ENCODE measurements at regions of chr9 and their contacts with region 1.

Region 1: GRCh38 chr9:126558051-126558665 is 55.6 kb upstream of the LMX1B start:
- H3K4me3 Mint-ChIP-seq: no peak overlapping the region
- H3K27ac Mint-ChIP-seq: no peak overlapping the region
- H3K4me1 Mint-ChIP-seq: peaks cover 22% of the 10 kb centered on the region
- H3K27me3 Mint-ChIP-seq: peaks cover 8% of the 10 kb centered on the region

Region 2: GRCh38 chr9:126499068-126499910 is 58.9 kb before region 1 on chr9:
- intact Hi-C with region 1: loop called (anchors 2 kb)
- H3K4me3 Mint-ChIP-seq: peak overlapping the region; percentile 71
- H3K27ac Mint-ChIP-seq: peak overlapping the region; percentile 29
- H3K4me1 Mint-ChIP-seq: peaks cover 49% of the 10 kb centered on the region
- H3K27me3 Mint-ChIP-seq: peaks cover 21% of the 10 kb centered on the region

Region 3: GRCh38 chr9:126514047-126514821 is 43.9 kb before region 1 on chr9:
- intact Hi-C with region 1: loop called (anchors 1 kb)
- H3K4me3 Mint-ChIP-seq: peak overlapping the region; percentile 60
- H3K27ac Mint-ChIP-seq: peak overlapping the region; percentile 92
- H3K4me1 Mint-ChIP-seq: peaks cover 56% of the 10 kb centered on the region
- H3K27me3 Mint-ChIP-seq: no peaks in the 10 kb centered on the region

Measured in dendritic cell treated with granulocyte-macrophage colony-stimulating factor and Interleukin-4, amounts not matched to agents 40 ng/mL and 50 ng/mL, for 4 days (primary cell).